ENCODE measurements at regions of chr5 and their contacts with region 1.

Region 1: DNA sequence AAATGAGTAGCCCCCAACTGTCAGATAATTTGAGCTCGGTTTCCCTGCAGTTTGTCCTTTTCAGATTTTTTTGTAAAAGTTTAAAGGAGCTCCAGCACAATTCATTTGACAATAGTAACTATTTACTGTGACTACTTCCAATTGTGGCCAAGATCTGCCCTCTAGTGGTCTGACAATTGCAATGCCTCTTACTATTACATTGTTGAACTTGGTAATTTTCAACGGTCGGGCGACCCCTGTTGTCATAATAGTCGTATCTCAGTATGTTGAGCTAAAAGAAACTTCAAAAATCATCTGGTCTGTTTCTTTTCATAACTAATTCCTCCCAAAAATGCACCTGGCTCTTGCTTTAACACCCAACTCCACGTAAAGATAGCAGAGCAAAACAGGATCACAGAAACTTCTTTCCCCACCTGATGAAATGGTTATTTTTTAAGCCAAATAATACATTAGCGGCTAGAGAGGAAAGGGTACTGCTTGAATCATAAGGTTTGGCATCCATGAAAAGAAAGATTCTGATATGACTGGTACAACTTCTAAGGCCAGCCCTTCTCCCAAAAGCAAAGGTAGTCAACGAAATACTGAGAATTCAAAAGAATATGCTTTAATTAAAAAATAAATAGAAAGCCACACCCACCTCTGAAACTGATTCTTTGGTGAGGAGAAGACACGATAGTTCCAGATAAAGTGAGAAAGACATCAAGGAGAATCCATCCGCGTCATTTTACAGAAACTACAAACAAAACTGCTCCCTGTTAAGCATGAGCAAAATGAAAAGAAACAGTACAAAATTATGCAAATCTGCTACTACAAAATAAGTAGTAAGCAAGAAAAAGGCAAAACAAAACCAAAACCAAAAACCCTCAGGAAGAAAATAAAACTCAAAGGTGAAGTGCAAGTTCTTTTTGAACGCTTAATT is 76.9 kb upstream of the HTR4 start:
- DNase-seq: peak; percentile 21 to 85 (median 64)
- ATAC-seq: peak; percentile 95
- H3K4me3 ChIP-seq: peak overlapping the region in 1 of 2 experiments; percentile 31
- H3K4me3 Mint-ChIP-seq: peak overlapping the region; percentile 67
- H3K27ac ChIP-seq: no peak overlapping the region
- H3K27ac Mint-ChIP-seq: no peak overlapping the region
- H3K4me1 ChIP-seq: no peaks in the 10 kb centered on the region
- H3K4me1 Mint-ChIP-seq: peaks cover 5% of the 10 kb centered on the region
- H3K27me3 ChIP-seq: no peaks in the 10 kb centered on the region
- H3K27me3 Mint-ChIP-seq: peaks cover 3% of the 10 kb centered on the region
- CTCF ChIP-seq: peak; percentile 99

Region 2: GRCh38 chr5:148179234-148179824 is 551.9 kb before region 1 on chr5:
- CTCF ChIA-PET with region 1: interaction called, 27 read pairs
- POLR2A ChIA-PET with region 1: no interaction called
- intact Hi-C with region 1: loop called in 1 of 2 experiments (anchors 1 kb)
- DNase-seq: peak in 3 of 9 experiments; percentile 5 to 64 (median 51)
- ATAC-seq: no peak
- H3K4me3 ChIP-seq: no peak overlapping the region
- H3K4me3 Mint-ChIP-seq: no peak overlapping the region
- H3K27ac ChIP-seq: no peak overlapping the region
- H3K27ac Mint-ChIP-seq: no peak overlapping the region
- H3K4me1 ChIP-seq: no peaks in the 10 kb centered on the region
- H3K4me1 Mint-ChIP-seq: no peaks in the 10 kb centered on the region
- H3K27me3 ChIP-seq: no peaks in the 10 kb centered on the region
- H3K27me3 Mint-ChIP-seq: peaks cover 12% of the 10 kb centered on the region
- CTCF ChIP-seq: peak; percentile 62

Region 3: DNA sequence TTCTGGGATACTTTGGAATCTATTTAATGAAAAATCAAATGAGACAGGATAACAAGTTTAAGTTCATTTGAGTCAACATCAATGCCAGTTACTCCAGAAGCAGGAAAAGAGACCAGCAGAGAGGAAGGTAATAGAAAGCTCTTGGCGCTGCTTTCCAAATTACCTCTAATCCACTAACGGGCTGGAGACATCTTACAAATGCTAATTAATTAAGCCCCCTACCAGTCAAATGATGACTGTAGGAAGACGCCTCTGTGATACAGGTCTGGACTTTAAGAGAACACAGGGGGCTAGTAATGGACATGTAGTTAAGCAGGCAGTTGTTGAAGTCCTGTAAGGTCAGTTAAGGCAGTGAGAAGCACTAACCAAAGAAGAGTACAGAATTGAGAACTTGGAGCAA is 11.6 kb before region 1 on chr5:
- CTCF ChIA-PET with region 1: interaction called, 25 read pairs
- POLR2A ChIA-PET with region 1: no interaction called
- intact Hi-C with region 1: no loop called
- DNase-seq: no peak
- ATAC-seq: no peak
- H3K4me3 ChIP-seq: no peak overlapping the region
- H3K4me3 Mint-ChIP-seq: no peak overlapping the region
- H3K27ac ChIP-seq: no peak overlapping the region
- H3K27ac Mint-ChIP-seq: no peak overlapping the region
- H3K4me1 ChIP-seq: no peaks in the 10 kb centered on the region
- H3K4me1 Mint-ChIP-seq: no peaks in the 10 kb centered on the region
- H3K27me3 ChIP-seq: no peaks in the 10 kb centered on the region
- H3K27me3 Mint-ChIP-seq: peaks cover 28% of the 10 kb centered on the region
- CTCF ChIP-seq: no peak

Region 4: GRCh38 chr5:148963664-148964063 is 232.5 kb after region 1 on chr5:
- CTCF ChIA-PET with region 1: interaction called, 92 read pairs
- POLR2A ChIA-PET with region 1: no interaction called
- intact Hi-C with region 1: loop called in 1 of 2 experiments (anchors 2 kb)
- DNase-seq: no peak
- ATAC-seq: no peak
- H3K4me3 ChIP-seq: no peak overlapping the region
- H3K4me3 Mint-ChIP-seq: no peak overlapping the region
- H3K27ac ChIP-seq: no peak overlapping the region
- H3K27ac Mint-ChIP-seq: no peak overlapping the region
- H3K4me1 ChIP-seq: no peaks in the 10 kb centered on the region
- H3K4me1 Mint-ChIP-seq: peaks cover 1% of the 10 kb centered on the region
- H3K27me3 ChIP-seq: no peaks in the 10 kb centered on the region
- H3K27me3 Mint-ChIP-seq: peaks cover 3% of the 10 kb centered on the region
- CTCF ChIP-seq: no peak

Region 5: DNA sequence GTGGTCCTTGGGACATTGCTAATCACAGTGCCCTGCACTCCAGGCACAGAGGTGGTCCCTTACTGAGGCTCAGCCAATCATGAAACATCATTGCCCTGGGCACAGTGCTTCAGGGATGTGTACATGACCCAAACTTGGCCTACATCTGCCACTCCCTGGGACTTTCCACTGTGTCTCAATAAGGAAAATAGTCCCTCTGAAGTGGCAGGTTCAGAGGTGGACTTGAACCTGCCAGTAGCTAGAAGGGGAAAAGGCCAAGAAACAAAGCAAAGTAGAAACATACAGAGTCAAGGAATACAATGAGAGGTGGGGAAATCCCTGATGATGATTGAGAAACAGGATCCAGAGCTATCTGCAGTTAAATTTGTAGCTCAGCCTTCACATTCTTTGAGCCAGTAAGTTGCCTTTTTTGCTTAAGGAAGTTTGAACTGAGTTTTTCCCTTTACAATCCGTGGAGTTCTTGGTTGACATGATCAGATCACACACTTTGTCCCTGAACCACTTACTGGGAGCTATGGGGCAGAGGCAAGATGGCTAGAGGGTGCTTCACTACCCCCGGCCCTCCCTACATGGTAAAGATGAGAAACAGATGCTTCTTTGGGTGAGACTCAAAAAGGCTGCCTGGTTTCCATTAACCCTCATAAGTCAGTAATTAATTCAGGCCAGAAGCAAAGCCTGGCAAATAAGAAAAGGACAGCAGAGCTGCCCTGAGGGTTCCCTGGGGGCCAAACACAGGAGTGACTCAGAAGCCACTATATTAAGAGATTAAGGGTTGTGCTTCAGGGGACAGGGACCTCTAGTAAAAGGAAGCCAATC is 274.1 kb after region 1 on chr5:
- CTCF ChIA-PET with region 1: interaction called, 94 read pairs
- POLR2A ChIA-PET with region 1: no interaction called
- intact Hi-C with region 1: no loop called
- DNase-seq: no peak
- ATAC-seq: no peak
- H3K4me3 ChIP-seq: no peak overlapping the region
- H3K4me3 Mint-ChIP-seq: no peak overlapping the region
- H3K27ac ChIP-seq: no peak overlapping the region
- H3K27ac Mint-ChIP-seq: no peak overlapping the region
- H3K4me1 ChIP-seq: no peaks in the 10 kb centered on the region
- H3K4me1 Mint-ChIP-seq: no peaks in the 10 kb centered on the region
- H3K27me3 ChIP-seq: no peaks in the 10 kb centered on the region
- H3K27me3 Mint-ChIP-seq: peaks cover 5% of the 10 kb centered on the region
- CTCF ChIP-seq: no peak

Region 6: GRCh38 chr5:149268928-149269557 is 537.8 kb after region 1 on chr5:
- CTCF ChIA-PET with region 1: interaction called, 3 read pairs
- POLR2A ChIA-PET with region 1: no interaction called
- intact Hi-C with region 1: loop called (anchors 2 to 5 kb)
- DNase-seq: peak in 2 of 9 experiments; percentile 53 to 63
- ATAC-seq: peak; percentile 45
- H3K4me3 ChIP-seq: no peak overlapping the region
- H3K4me3 Mint-ChIP-seq: no peak overlapping the region
- H3K27ac ChIP-seq: no peak overlapping the region
- H3K27ac Mint-ChIP-seq: no peak overlapping the region
- H3K4me1 ChIP-seq: peaks cover 14% of the 10 kb centered on the region
- H3K4me1 Mint-ChIP-seq: peaks cover 15% of the 10 kb centered on the region
- H3K27me3 ChIP-seq: peaks cover 0 to 12% of the 10 kb centered on the region in 2 experiments
- H3K27me3 Mint-ChIP-seq: peaks cover 28% of the 10 kb centered on the region
- CTCF ChIP-seq: peak; percentile 74

Region 7: DNA sequence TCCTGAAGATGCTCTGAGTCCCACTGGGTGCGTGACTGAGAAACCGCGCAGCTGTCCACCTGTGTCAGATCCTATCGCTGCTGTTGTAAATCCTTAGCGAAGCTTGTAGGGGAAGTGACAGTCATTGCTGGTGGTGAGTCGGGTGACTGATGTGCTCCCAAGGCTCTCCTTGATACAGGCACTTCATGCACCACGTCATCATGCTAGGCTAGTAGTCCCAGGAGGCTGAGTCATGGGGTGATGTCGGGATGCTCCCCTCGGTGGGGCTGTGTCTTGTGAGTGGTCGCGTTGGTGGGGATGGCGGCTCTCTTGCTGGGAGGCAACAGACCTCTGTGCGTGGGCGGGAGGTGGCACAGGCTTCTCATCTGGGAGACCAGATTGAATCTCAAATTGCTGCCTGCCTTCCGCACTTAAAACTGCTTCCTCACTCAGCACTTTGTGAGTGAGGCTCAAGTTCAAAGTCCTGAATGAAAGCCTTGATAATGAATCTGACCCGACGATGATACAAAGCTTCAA is 735.3 kb after region 1 on chr5:
- CTCF ChIA-PET with region 1: no interaction called
- POLR2A ChIA-PET with region 1: no interaction called
- intact Hi-C with region 1: no loop called
- DNase-seq: no peak
- ATAC-seq: no peak
- H3K4me3 ChIP-seq: no peak overlapping the region
- H3K4me3 Mint-ChIP-seq: no peak overlapping the region
- H3K27ac ChIP-seq: no peak overlapping the region
- H3K27ac Mint-ChIP-seq: no peak overlapping the region
- H3K4me1 ChIP-seq: no peaks in the 10 kb centered on the region
- H3K4me1 Mint-ChIP-seq: no peaks in the 10 kb centered on the region
- H3K27me3 ChIP-seq: peaks cover 0 to 9% of the 10 kb centered on the region in 2 experiments
- H3K27me3 Mint-ChIP-seq: peaks cover 13% of the 10 kb centered on the region
- CTCF ChIP-seq: no peak

Measured in CD8-positive, alpha-beta T cell (primary cell).